CD4-positive, alpha-beta T cell (primary cell): ENCODE measurements at regions of chr21 and their contacts with region 1.

Region 1: GRCh38 chr21:42537106-42537742 is 23.6 kb downstream of the SLC37A1 start:
- DNase-seq: peak in 4 of 14 experiments; percentile 25 to 52 (median 38)
- ATAC-seq: peak; percentile 46
- H3K4me3 ChIP-seq: no peak overlapping the region
- H3K4me3 Mint-ChIP-seq: no peak overlapping the region
- H3K27ac ChIP-seq: no peak overlapping the region
- H3K27ac Mint-ChIP-seq: no peak overlapping the region
- H3K4me1 ChIP-seq: peaks cover 17% of the 10 kb centered on the region
- H3K4me1 Mint-ChIP-seq: peaks cover 15% of the 10 kb centered on the region
- H3K27me3 ChIP-seq: no peaks in the 10 kb centered on the region
- H3K27me3 Mint-ChIP-seq: no peaks in the 10 kb centered on the region
- CTCF ChIP-seq: no peak

Region 2: GRCh38 chr21:41966041-41966684 is 571.1 kb before region 1 on chr21:
- CTCF ChIA-PET with region 1: no interaction called
- POLR2A ChIA-PET with region 1: no interaction called
- intact Hi-C with region 1: no loop called
- DNase-seq: peak in 1 of 14 experiments; percentile 25
- ATAC-seq: no peak
- H3K4me3 ChIP-seq: no peak overlapping the region
- H3K4me3 Mint-ChIP-seq: no peak overlapping the region
- H3K27ac ChIP-seq: no peak overlapping the region
- H3K27ac Mint-ChIP-seq: no peak overlapping the region
- H3K4me1 ChIP-seq: peaks cover 4% of the 10 kb centered on the region
- H3K4me1 Mint-ChIP-seq: no peaks in the 10 kb centered on the region
- H3K27me3 ChIP-seq: peaks cover 0 to 11% of the 10 kb centered on the region in 2 experiments
- H3K27me3 Mint-ChIP-seq: peaks cover 8% of the 10 kb centered on the region
- CTCF ChIP-seq: no peak

Region 3: DNA sequence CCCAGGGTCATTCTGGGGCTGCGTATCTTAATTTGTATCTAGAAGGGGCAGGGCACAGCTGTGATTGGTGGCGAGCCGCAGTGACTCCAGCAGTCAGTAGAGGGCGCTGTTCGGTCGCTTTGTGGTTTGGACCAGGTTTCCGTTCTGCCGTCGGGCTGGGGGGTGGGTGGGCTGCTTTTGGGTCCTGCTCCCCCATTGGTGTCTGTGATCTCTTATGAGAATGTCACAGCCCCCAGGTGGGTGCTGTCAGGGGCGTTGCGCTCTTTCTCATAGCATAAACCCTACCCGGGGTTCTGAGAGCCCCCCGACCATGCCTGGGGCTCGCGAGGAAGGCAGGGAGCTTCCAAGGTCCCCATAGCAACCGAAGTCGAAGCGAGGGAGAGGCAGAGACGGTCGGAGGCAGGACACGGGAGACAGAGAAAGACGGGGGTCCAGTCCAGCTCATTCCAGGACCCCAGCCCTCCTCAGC is 227.4 kb before region 1 on chr21:
- CTCF ChIA-PET with region 1: interaction called, 3 read pairs
- POLR2A ChIA-PET with region 1: no interaction called
- intact Hi-C with region 1: loop called in 1 of 2 experiments (anchors 5 kb)
- DNase-seq: peak; percentile 61 to 85 (median 67)
- ATAC-seq: peak; percentile 86
- H3K4me3 ChIP-seq: no peak overlapping the region
- H3K4me3 Mint-ChIP-seq: no peak overlapping the region
- H3K27ac ChIP-seq: no peak overlapping the region
- H3K27ac Mint-ChIP-seq: no peak overlapping the region
- H3K4me1 ChIP-seq: peaks cover 18% of the 10 kb centered on the region
- H3K4me1 Mint-ChIP-seq: peaks cover 15% of the 10 kb centered on the region
- H3K27me3 ChIP-seq: peaks cover 9 to 11% of the 10 kb centered on the region in 2 experiments
- H3K27me3 Mint-ChIP-seq: peaks cover 12% of the 10 kb centered on the region
- CTCF ChIP-seq: peak; percentile 80

Region 4: DNA sequence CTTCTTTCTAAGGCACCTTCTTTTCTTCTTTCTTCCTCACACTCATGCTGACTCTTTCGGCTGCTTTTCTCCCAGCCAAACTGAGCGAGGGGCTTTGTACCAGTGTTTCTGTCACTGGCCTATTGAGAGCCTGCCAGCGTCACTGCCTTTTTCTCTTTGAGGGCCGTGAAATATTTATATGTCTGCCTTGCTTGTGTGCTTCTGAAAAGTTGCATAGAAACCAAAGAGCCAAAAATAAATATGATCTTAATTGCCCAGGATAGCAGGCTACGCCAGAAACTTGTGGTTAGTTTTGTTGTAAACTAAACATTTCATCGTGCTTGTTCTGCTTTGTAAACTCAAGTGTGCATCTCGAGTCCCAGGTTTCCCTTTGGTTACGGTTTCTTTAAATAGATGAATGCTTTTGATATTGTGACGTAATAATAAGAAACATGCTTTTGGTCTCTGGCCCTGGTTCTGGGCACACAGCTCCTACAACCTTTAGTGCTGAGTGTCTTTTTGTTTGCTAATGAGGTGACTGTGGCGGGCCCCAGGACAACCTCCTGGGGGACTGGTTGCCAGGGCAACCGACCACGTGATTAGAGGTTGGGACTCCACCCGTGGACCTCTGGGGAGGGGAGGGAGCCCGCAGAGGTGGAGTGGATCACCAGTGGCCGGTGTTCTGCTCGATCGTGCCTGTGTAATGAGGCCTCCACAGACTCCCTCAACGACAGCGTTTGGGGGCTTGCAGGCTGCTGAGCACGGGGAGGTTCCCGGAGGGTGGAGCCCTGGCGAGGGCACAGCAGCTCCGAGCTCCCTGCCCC is 12.7 kb before region 1 on chr21:
- CTCF ChIA-PET with region 1: no interaction called
- POLR2A ChIA-PET with region 1: interaction called, 11 read pairs
- intact Hi-C with region 1: no loop called
- DNase-seq: peak in 6 of 14 experiments; percentile 16 to 63 (median 38)
- ATAC-seq: no peak
- H3K4me3 ChIP-seq: no peak overlapping the region
- H3K4me3 Mint-ChIP-seq: no peak overlapping the region
- H3K27ac ChIP-seq: no peak overlapping the region
- H3K27ac Mint-ChIP-seq: peak overlapping the region; percentile 65
- H3K4me1 ChIP-seq: peaks cover 37% of the 10 kb centered on the region
- H3K4me1 Mint-ChIP-seq: peaks cover 59% of the 10 kb centered on the region
- H3K27me3 ChIP-seq: no peaks in the 10 kb centered on the region
- H3K27me3 Mint-ChIP-seq: no peaks in the 10 kb centered on the region
- CTCF ChIP-seq: no peak

Region 5: DNA sequence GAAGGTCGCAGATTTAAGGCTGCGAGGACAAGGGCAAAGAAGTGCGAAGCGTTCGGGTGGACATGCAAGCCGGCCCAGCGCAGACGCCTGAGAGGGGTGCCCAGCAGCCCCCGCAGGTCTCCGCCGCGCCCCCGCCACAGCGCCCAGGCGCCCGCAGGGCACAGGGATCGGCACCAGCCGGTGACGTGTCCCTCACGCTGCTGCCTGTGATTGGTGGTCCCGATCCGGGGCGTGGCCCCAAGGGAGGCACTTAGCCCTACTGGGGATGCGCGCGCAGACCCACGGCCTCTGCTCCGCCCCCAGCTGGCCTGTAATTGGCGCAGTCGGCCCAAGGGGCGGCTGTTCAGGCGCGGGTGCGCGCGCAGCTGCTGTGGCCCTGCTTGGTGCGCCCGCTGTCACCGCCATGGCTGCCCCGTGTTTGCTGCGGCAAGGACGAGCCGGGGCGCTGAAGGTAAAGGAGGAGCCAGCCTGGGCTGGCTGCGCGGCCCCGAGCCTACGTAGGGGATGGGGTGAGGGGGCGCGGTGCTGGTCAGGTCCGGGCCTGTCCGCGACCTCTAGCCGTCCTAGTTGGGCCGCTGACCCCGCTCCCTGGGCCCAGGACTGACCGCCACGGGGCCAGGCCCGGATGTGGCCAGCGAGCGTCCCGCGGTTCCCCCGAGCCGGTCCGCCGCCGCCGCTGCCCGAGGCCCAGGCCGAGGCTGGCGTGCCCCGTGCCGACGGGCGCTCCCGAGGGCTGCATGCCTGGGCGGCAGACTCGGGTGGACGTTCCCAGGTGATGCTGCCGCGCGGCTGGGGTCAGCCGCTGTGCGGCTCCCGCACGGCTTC is 355.9 kb after region 1 on chr21 and contains the start of gene NDUFV3:
- CTCF ChIA-PET with region 1: no interaction called
- POLR2A ChIA-PET with region 1: no interaction called
- intact Hi-C with region 1: no loop called
- DNase-seq: peak; percentile 100
- ATAC-seq: peak; percentile 93
- H3K4me3 ChIP-seq: peak within 1 kb of the TSS; percentile 76
- H3K4me3 Mint-ChIP-seq: peak within 1 kb of the TSS; percentile 91
- H3K27ac ChIP-seq: peak within 1 kb of the TSS; percentile 86
- H3K27ac Mint-ChIP-seq: peak within 1 kb of the TSS; percentile 97
- H3K4me1 ChIP-seq: peaks cover 12% of the 10 kb centered on the region
- H3K4me1 Mint-ChIP-seq: peaks cover 19% of the 10 kb centered on the region
- H3K27me3 ChIP-seq: no peaks in the 10 kb centered on the region
- H3K27me3 Mint-ChIP-seq: no peaks in the 10 kb centered on the region
- CTCF ChIP-seq: no peak
- total RNA-seq, gene NDUFV3: 15.3 to 15.8 TPM